Mammary epithelial cell (primary cell): ENCODE measurements at regions of chr6 and their contacts with region 1.

Region 1: DNA sequence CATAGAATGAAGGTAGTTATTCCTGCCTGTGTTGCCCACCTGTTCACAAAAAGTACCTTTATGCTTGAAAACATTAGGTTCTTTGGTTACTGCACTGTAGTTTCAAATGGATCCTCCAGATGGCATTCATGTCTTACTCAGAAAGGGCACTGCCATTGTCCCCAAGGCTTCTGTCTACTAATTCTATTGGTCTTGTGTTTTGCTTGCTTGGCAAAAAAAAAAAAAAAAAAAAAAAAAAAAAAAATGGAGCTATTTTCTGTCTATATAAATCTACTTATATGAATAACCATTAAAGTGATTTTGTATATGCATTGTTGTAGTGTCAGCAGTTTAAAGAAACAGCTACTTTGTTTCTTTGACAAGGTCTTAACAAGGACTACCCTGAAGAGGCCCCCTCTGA is 12.7 kb upstream of the EFHC1 start:
- DNase-seq: peak; percentile 37
- H3K4me3 ChIP-seq: no peak overlapping the region
- H3K27ac ChIP-seq: no peak overlapping the region
- H3K4me1 ChIP-seq: no peaks in the 10 kb centered on the region
- H3K27me3 ChIP-seq: no peaks in the 10 kb centered on the region
- CTCF ChIP-seq: peak; percentile 58 to 61

Region 2: DNA sequence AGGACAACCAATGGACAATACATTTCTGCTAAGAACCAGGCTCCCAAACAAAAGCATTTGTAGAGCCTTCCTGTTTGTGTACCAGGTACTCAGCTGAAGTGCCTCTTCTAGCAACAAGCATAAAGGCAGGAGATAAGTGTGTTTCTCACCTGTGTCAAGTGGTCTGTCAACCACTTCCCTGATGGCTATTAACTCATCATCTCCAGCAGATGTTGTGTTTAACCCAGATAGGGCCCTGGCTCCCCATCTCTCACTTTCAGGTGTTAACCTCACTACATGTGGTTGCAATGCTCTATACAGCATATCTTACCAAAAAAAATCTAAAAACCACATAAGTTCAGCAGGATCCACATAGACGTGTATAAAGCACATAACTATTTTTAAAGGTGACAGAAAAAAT is 230.9 kb before region 1 on chr6:
- CTCF ChIA-PET with region 1: interaction called, 11 read pairs
- dilution Hi-C with region 1: no loop called
- in situ Hi-C with region 1: no loop called
- intact Hi-C with region 1: no loop called
- DNase-seq: no peak
- H3K4me3 ChIP-seq: no peak overlapping the region
- H3K27ac ChIP-seq: no peak overlapping the region
- H3K4me1 ChIP-seq: no peaks in the 10 kb centered on the region
- H3K27me3 ChIP-seq: peaks cover 5% of the 10 kb centered on the region
- CTCF ChIP-seq: no peak

Region 3: GRCh38 chr6:52616059-52616690 is 208.7 kb after region 1 on chr6:
- CTCF ChIA-PET with region 1: no interaction called
- dilution Hi-C with region 1: no loop called
- in situ Hi-C with region 1: no loop called
- intact Hi-C with region 1: no loop called
- DNase-seq: no peak
- H3K4me3 ChIP-seq: no peak overlapping the region
- H3K27ac ChIP-seq: no peak overlapping the region
- H3K4me1 ChIP-seq: peaks cover 19% of the 10 kb centered on the region
- H3K27me3 ChIP-seq: no peaks in the 10 kb centered on the region
- CTCF ChIP-seq: no peak

Region 4: DNA sequence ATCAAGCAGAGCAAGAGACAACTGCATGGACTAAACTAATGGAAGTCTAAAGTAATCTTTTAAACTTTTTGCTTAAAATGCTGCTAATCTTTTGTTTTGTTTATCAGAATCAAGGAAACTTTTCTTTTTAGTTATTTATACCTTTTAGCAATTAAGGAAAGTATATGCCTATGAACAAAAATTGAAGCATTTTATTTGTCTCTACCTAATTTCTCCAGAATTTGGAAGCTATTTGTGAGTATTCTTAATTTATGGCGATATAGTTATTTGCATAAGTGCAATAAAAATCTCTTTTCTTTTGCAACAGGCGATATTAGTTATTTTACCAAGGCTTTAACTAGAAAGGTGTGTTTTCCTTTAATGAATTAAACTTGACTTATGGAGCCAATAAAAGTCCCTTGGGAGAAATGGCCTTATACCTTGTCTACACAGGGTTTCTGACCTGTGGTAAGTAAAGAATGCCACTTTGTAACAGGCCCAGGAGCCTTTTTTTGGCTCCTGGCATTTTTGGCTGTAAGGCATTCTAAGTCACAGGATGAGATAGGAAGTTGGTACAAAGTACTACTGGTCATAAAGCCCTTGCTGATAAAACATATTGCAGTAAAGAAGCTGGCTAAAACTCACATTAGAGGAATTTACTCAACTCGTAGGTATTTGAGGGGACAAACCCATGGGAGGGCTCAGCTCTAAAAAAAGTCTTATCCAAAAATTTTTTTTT is 300.7 kb after region 1 on chr6:
- CTCF ChIA-PET with region 1: interaction called, 27 read pairs
- dilution Hi-C with region 1: no loop called
- in situ Hi-C with region 1: no loop called
- intact Hi-C with region 1: no loop called
- DNase-seq: no peak
- H3K4me3 ChIP-seq: no peak overlapping the region
- H3K27ac ChIP-seq: no peak overlapping the region
- H3K4me1 ChIP-seq: peaks cover 2% of the 10 kb centered on the region
- H3K27me3 ChIP-seq: no peaks in the 10 kb centered on the region
- CTCF ChIP-seq: no peak